ENCODE measurements at regions of chr13 and their contacts with region 1.

Region 1: DNA sequence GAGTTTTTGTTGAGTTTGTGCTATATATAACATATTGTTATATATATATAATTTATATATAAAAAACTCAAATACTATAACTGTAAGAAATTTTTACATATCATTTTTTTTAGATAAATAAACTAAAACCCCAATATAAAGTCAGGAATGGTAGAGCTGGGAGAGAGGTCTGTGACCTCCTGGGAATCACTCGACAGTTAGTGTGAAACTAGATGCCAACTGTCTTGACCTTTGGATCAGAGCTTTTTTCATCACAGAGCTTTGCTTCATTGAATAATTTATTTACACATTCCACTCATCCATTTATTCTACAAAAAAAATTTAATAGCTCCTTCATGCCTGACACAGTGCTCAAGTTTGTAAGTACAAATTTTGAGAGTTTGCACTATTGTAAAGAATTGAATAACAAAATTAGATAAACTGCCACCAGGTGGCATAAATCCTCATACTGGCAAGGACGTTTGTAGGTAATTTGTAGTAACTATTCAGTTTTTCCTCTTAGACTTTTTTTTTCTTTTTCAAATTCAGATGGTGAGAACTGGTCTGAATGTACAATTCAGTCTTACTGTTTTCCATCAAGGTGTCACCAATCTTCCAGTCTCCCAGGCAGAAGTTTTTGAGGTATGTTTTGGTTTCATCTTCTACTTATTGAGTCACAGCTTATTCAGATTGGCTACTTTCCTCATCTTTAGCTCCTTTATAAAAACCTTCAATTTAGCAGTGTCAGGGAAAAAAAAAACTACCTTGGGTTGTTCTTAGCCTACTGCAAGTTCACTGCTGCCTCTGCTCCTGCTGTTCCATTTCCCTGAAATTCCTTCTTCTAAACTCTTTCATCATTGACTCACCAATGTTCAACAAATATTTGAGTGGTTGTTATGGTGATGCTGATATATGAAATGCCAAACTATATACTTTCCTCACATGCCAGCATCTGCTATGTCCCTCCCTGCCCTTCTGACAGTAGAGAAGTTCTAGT is 28.7 kb downstream of the LACC1 start:
- DNase-seq: no peak

Region 2: GRCh38 chr13:44032802-44033201 is 124.4 kb after region 1 on chr13:
- CTCF ChIA-PET with region 1: interaction called, 13 read pairs
- POLR2A ChIA-PET with region 1: no interaction called
- DNase-seq: no peak

Region 3: DNA sequence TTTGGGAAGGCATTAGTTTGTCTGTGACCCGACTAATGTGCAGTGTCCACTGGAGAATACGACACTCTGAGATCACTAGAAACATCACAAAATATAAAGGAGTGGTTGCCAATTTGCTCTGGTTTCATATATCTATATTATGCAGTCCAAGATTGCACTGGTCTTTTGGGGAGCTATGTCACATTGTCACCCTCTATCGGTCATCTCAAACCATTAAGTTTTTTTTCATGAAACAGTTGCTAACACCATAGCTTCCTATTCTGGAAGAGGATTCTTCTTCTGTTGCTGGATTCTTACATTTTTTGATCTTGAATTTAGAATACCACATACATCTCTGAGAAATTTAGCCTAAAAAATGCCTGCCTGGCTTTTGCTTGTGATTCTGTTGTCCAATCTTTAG is 139.9 kb after region 1 on chr13:
- CTCF ChIA-PET with region 1: interaction called, 11 read pairs
- POLR2A ChIA-PET with region 1: no interaction called
- DNase-seq: no peak

Region 4: GRCh38 chr13:44088991-44089413 is 180.6 kb after region 1 on chr13:
- CTCF ChIA-PET with region 1: no interaction called
- POLR2A ChIA-PET with region 1: no interaction called
- DNase-seq: no peak